ENCODE measurements at regions of chr6 and their contacts with region 1.

Region 1: GRCh38 chr6:106223300-106223930 is 102.1 kb downstream of the ATG5 start:
- DNase-seq: peak; percentile 15
- H3K4me3 ChIP-seq: no peak overlapping the region
- H3K27ac ChIP-seq: no peak overlapping the region
- H3K4me1 ChIP-seq: peaks cover 0 to 4% of the 10 kb centered on the region in 2 experiments; a peak in 1 of 4 replicates
- H3K27me3 ChIP-seq: no peaks in the 10 kb centered on the region
- CTCF ChIP-seq: peak; percentile 82
- EP300 ChIP-seq: no peak
- RAD21 ChIP-seq: peak; percentile 90

Region 2: GRCh38 chr6:105484238-105485161 is 738.9 kb before region 1 on chr6:
- CTCF ChIA-PET with region 1: interaction called, 12 read pairs
- POLR2A ChIA-PET with region 1: no interaction called
- DNase-seq: peak; percentile 25
- H3K4me3 ChIP-seq: no peak overlapping the region
- H3K27ac ChIP-seq: peak overlapping the region in 1 of 2 experiments; percentile 53; a peak in 2 of 4 replicates
- H3K4me1 ChIP-seq: peaks cover 2 to 17% of the 10 kb centered on the region in 2 experiments
- H3K27me3 ChIP-seq: no peaks in the 10 kb centered on the region
- CTCF ChIP-seq: peak; percentile 99
- EP300 ChIP-seq: no peak
- RAD21 ChIP-seq: peak; percentile 91

Region 3: DNA sequence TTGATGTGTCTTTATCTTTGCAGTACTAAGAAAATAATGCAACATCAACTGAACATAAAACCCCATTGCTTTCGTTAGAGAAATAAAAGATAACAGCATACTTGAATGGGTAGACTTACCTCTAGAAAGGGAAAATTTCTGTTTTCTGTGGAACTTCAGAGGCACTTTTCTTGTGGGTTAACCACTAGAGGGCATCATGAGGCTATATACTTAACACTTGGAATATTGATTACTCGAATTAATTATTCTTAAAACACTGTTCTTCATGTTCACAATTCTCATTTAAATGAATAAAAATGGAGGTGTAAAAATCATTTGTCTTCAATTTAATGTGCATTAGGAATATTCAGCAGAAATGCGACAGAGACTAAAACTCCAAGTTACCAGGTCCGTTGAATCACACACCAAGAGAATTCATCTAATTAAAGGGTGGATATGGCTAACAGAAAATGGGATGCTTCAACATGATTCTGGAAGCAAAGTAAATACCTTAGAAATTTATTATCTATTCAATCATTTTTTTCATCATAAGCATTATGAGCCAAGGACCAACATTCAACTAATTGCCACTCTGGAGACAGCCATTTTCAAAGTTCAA is 489.8 kb before region 1 on chr6:
- CTCF ChIA-PET with region 1: interaction called, 11 read pairs
- POLR2A ChIA-PET with region 1: no interaction called
- DNase-seq: peak; percentile 1
- H3K4me3 ChIP-seq: no peak overlapping the region
- H3K27ac ChIP-seq: no peak overlapping the region
- H3K4me1 ChIP-seq: no peaks in the 10 kb centered on the region; a peak in 2 of 4 replicates
- H3K27me3 ChIP-seq: no peaks in the 10 kb centered on the region
- CTCF ChIP-seq: peak; percentile 70
- EP300 ChIP-seq: no peak
- RAD21 ChIP-seq: peak; percentile 60

Region 4: DNA sequence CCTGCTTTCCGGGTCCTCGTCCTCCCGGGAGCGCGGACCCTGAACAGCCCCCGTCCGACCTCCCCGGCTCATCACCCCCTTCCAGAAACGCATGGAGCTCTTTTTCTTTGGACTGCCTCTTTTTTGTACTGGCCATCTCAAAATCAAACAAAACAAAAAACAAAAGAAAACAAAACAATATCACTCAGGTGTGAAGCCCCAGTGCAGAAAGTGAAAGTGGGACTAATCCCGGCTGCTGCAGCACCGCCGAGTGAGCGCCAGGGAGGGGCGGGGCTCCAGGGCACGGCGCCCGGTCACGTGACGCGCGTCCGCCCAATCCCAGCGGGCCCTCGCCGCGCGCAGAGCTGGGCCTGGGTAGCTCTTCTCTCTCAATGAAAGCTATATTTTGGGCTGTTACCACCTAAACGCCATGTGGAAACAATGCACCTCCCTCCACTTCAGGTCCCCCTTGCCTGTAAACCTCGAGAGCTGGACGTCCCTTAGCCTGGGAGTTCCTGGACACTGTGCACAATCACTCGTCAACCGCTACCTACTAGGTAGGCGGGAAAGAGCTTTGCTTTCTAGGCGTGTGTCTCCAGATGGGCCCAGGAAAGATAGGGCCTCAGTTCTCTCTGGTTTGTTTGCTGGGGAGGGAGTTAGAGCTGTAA is 231.0 kb before region 1 on chr6:
- CTCF ChIA-PET with region 1: interaction called, 15 read pairs
- POLR2A ChIA-PET with region 1: no interaction called
- DNase-seq: peak; percentile 95
- H3K4me3 ChIP-seq: peak overlapping the region; percentile 78 to 81
- H3K27ac ChIP-seq: peak overlapping the region; percentile 43 to 86
- H3K4me1 ChIP-seq: peaks cover 6 to 16% of the 10 kb centered on the region in 2 experiments; a peak in 2 of 4 replicates
- H3K27me3 ChIP-seq: no peaks in the 10 kb centered on the region
- CTCF ChIP-seq: no peak
- EP300 ChIP-seq: no peak
- RAD21 ChIP-seq: no peak

Region 5: DNA sequence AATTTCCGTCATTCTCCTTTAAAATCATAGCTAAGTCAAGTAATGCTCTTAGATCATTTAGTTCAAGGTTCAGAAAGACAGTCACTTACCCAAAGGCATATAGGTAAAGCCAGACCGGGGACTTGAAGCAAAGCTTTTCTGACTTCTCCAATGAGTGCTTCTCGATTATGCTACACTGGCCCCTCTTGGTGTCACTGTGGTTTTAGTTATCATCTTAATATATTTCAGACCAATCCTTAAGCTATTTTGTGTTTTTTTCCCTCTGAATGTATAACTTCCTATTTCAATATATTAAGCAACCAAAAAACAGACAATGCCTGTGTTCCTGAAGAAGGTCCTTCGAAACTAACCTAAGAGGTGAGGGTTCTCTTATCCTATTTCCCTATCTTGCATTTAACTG is 133.4 kb before region 1 on chr6:
- CTCF ChIA-PET with region 1: interaction called, 10 read pairs
- POLR2A ChIA-PET with region 1: no interaction called
- DNase-seq: no peak
- H3K4me3 ChIP-seq: peak overlapping the region in 1 of 2 experiments; percentile 19; a peak in 2 of 4 replicates
- H3K27ac ChIP-seq: no peak overlapping the region
- H3K4me1 ChIP-seq: peaks cover 5 to 13% of the 10 kb centered on the region in 2 experiments; a peak in 3 of 4 replicates
- H3K27me3 ChIP-seq: no peaks in the 10 kb centered on the region
- CTCF ChIP-seq: peak; percentile 54
- EP300 ChIP-seq: no peak
- RAD21 ChIP-seq: peak; percentile 60

Region 6: GRCh38 chr6:106125925-106126435 is 97.4 kb before region 1 on chr6:
- CTCF ChIA-PET with region 1: no interaction called
- POLR2A ChIA-PET with region 1: no interaction called
- DNase-seq: no peak
- H3K4me3 ChIP-seq: no peak overlapping the region
- H3K27ac ChIP-seq: no peak overlapping the region
- H3K4me1 ChIP-seq: peaks cover 0 to 11% of the 10 kb centered on the region in 2 experiments; a peak in 3 of 4 replicates
- H3K27me3 ChIP-seq: no peaks in the 10 kb centered on the region
- CTCF ChIP-seq: no peak
- EP300 ChIP-seq: no peak
- RAD21 ChIP-seq: no peak

Region 7: GRCh38 chr6:106256201-106256968 is 33.0 kb after region 1 on chr6:
- CTCF ChIA-PET with region 1: interaction called, 12 read pairs
- POLR2A ChIA-PET with region 1: no interaction called
- DNase-seq: peak; percentile 58
- H3K4me3 ChIP-seq: no peak overlapping the region
- H3K27ac ChIP-seq: peak overlapping the region; percentile 87 to 91
- H3K4me1 ChIP-seq: peaks cover 34 to 45% of the 10 kb centered on the region in 2 experiments
- H3K27me3 ChIP-seq: no peaks in the 10 kb centered on the region
- CTCF ChIP-seq: no peak
- EP300 ChIP-seq: peak; percentile 52 to 82; a peak in 2 of 4 replicates
- RAD21 ChIP-seq: no peak

Region 8: DNA sequence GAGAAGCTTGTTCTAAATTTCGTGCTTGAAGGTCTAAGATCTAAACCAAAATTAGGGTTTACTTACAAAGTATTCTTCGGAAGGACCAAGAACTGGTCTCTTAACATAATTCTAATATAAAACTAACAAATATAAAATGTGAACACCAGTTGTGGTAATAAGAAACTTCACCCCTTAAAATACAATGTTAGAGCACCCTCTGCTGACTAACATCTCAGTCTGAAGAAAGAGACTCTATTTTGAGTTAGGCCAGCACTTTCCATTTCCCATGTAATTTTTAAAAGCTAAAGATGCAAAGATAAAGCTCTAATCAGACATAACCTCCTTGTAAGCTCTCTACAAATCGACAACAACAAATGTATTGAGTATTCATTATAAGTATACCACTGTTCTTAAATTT is 77.5 kb after region 1 on chr6:
- CTCF ChIA-PET with region 1: interaction called, 13 read pairs
- POLR2A ChIA-PET with region 1: no interaction called
- DNase-seq: peak; percentile 29
- H3K4me3 ChIP-seq: no peak overlapping the region; a peak in 1 of 4 replicates
- H3K27ac ChIP-seq: no peak overlapping the region
- H3K4me1 ChIP-seq: peaks cover 0 to 10% of the 10 kb centered on the region in 2 experiments; a peak in 3 of 4 replicates
- H3K27me3 ChIP-seq: no peaks in the 10 kb centered on the region
- CTCF ChIP-seq: peak; percentile 80
- EP300 ChIP-seq: no peak
- RAD21 ChIP-seq: peak; percentile 82

Region 9: GRCh38 chr6:106347341-106347740 is 123.9 kb after region 1 on chr6:
- CTCF ChIA-PET with region 1: no interaction called
- POLR2A ChIA-PET with region 1: no interaction called
- DNase-seq: no peak
- H3K4me3 ChIP-seq: no peak overlapping the region
- H3K27ac ChIP-seq: no peak overlapping the region
- H3K4me1 ChIP-seq: no peaks in the 10 kb centered on the region
- H3K27me3 ChIP-seq: no peaks in the 10 kb centered on the region
- CTCF ChIP-seq: no peak
- EP300 ChIP-seq: no peak
- RAD21 ChIP-seq: no peak

Measured in SK-N-SH (cell line).